Activated T-helper 1 cell treated with anti-CD3 and anti-CD28 coated beads, Interleukin-12 subunit alpha, Interleukin-12 subunit beta, Interleukin-2, Interleukin-4 antibody, amounts not matched to agents 30 ng/mL and 10 ng/mL and 1 ng/mL, durations not matched to agents 14 hours and 24 hours and 36 hours (primary cell): ENCODE measurements at regions of chr9 and their contacts with region 1.

Region 1: GRCh38 chr9:22079873-22080341 is 70.8 kb upstream of the CDKN2B start:
- DNase-seq: peak; percentile 72
- H3K4me3 Mint-ChIP-seq: peak overlapping the region; percentile 56
- H3K27ac Mint-ChIP-seq: peak overlapping the region; percentile 78
- H3K4me1 Mint-ChIP-seq: peaks cover 54% of the 10 kb centered on the region
- H3K27me3 Mint-ChIP-seq: peaks cover 17% of the 10 kb centered on the region

Region 2: DNA sequence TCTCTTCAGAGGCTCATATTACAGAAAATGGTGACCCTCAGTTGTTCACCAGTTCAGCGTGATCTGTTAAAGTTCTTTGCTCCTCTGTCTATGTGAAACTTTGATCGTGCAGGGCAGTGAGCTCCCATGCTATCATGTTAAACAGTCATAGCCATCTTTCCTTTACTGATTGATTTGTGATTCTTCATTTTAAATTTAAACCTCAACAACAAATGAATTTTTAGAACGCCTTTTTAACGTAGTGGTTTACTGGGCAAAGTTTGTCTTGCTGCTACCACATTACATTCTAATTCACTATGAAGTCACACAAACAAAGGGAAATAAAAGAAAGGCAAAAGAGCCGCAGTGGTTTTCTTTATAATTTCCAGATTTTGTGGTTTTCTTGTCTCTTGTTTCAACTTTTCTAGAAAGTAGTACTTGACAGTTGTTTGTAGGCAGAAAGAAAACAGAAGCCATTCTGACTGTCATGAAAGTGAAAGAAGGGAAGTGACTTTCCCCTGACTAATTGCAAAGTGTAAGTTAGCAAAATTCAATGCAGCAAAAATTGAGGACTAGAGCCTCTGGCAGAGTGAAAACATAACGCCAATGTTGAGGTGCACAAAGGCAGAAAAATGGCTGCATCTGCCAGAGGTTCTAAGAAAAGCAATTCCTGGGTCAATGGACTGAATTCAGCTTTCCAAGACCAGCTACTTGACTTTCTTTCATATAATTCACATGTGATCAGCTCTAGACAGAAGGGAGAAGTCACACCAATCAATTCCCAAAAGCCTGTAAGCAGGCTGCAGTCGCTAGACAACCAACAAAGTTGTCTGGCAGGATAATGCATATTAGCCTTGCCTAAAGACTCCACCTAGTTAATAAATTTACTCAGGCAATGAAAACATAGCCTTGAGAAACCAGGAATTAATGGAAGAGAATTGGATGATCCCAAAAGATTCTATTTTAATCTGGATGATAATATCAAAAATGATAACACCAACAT is 722.1 kb before region 1 on chr9:
- intact Hi-C with region 1: loop called (anchors 1 kb)
- DNase-seq: no peak
- H3K4me3 Mint-ChIP-seq: peak overlapping the region; percentile 56
- H3K27ac Mint-ChIP-seq: peak overlapping the region; percentile 68
- H3K4me1 Mint-ChIP-seq: peaks cover 14% of the 10 kb centered on the region
- H3K27me3 Mint-ChIP-seq: peaks cover 57% of the 10 kb centered on the region

Region 3: DNA sequence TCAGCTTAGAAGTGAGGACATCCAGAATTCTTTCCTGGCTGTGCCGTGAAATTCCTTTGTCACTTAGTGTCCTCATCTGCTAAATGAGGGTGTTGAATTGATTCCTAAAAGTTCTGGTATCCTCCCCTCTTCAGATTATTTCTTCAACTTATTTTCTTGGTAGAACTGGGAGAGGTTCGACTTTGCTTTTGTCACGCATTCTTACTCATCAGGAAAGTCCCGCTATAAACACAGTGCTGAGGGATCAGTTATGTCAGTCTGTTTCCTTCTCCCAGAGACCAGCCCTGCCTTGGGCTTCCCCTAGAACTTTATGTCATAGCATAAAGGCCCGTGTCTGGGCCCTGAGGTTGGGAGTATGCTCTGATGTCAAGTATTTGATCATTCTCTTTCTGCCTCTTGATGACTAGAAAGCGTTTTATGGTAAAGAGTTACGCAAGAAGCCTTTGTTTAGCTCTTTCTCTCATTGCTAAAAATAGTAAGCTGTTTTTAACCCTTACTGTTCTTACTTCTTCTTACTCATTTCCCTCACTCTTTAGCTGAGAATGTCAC is 247.9 kb before region 1 on chr9:
- intact Hi-C with region 1: loop called (anchors 1 kb)
- DNase-seq: peak; percentile 66
- H3K4me3 Mint-ChIP-seq: peak overlapping the region; percentile 20
- H3K27ac Mint-ChIP-seq: peak overlapping the region; percentile 73
- H3K4me1 Mint-ChIP-seq: peaks cover 73% of the 10 kb centered on the region
- H3K27me3 Mint-ChIP-seq: no peaks in the 10 kb centered on the region

Region 4: DNA sequence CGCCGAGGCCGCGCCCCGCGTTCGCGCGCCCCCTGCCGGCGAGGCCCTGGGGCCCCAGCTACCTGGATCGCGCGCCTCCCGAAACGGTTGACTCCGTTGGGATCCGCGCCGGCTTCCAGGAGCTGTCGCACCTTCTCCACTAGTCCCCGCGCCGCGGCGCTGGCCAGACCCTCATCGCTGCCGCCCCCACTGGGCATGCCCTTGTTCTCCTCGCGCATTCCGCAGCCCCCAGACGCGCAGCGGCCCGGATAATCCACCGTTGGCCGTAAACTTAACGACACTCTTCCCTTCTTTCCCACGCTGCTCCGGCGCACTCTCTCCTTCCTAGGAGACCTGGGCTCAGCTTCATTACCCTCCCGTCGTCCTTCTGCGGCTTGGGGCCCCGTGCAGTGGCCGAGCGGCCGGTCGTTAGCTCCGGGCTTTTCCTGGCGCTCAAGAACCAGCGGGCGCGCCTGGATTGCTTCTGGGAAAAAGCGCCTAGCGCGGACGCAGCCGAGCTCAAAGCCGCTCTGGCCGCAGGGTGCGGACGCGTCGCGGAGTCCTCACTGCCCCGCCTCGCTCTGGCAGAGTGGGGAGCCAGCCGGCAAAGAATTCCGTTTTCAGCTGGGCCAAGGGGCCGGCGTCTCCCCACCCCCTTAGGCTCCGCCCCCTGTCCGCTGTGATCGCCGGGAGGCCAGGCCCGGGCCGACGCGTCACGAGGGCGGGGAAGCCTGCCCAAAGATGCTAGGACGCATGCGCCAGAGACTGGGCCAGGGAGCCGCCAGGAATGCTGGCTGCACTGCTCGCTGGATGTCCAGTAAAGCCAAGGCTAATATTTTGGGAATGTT is 71.0 kb before region 1 on chr9 and contains the start of gene CDKN2B:
- intact Hi-C with region 1: loop called (anchors 2 kb)
- DNase-seq: peak; percentile 66
- H3K4me3 Mint-ChIP-seq: peak within 1 kb of the TSS; percentile 82
- H3K27ac Mint-ChIP-seq: no peak within 1 kb of the TSS
- H3K4me1 Mint-ChIP-seq: peaks cover 36% of the 10 kb centered on the region
- H3K27me3 Mint-ChIP-seq: peaks cover 65% of the 10 kb centered on the region
- total RNA-seq, gene CDKN2B: 0.73 and 0.76 TPM in 2 replicates

Region 5: GRCh38 chr9:22097697-22098096 is 17.8 kb after region 1 on chr9:
- intact Hi-C with region 1: loop called (anchors 1 kb)
- DNase-seq: no peak
- H3K4me3 Mint-ChIP-seq: no peak overlapping the region
- H3K27ac Mint-ChIP-seq: no peak overlapping the region
- H3K4me1 Mint-ChIP-seq: peaks cover 36% of the 10 kb centered on the region
- H3K27me3 Mint-ChIP-seq: peaks cover 30% of the 10 kb centered on the region

Region 6: GRCh38 chr9:22147813-22148524 is 68.1 kb after region 1 on chr9:
- intact Hi-C with region 1: loop called (anchors 1 kb)
- DNase-seq: peak; percentile 15
- H3K4me3 Mint-ChIP-seq: no peak overlapping the region
- H3K27ac Mint-ChIP-seq: peak overlapping the region; percentile 75
- H3K4me1 Mint-ChIP-seq: peaks cover 32% of the 10 kb centered on the region
- H3K27me3 Mint-ChIP-seq: peaks cover 22% of the 10 kb centered on the region

Region 7: DNA sequence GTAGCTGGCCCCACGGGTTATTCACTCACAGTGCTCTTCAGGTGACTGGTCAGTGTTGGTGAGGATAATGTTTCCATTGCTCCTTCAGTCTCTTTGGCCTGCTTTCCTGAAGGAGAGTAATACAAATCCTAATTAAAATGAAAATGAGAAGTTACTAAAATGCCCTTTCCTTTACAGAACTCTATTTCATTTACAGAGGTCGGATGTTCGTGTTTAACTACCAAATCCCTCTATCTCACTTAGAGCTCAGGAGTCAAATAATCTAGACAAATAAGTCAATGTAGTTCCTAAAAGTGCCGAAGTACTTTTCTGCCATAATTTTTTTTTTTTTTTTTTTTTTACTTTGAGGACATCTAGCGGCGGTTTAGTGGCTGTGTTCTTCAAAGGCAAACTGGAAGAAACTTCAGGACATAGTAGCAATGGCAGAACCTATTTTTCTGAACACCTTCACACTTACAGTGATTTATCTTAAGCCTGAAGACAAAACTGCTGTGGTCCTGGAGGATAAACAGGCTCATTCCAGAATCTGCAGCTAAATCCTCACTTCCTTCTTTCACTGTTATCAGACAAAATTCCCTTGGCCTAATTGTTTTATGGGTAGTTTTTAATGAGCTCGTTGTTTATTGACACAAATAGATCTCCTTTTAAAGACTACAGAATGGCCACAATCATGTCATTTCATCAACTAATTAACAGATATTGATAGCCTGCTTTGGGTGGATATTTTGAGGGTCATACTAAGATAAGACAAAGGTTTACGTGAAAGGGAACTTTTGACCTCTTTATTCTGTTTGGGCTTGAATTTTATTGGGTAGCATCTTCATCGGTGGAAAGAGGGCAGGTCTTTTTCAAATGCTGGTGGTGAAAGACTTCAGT is 159.1 kb after region 1 on chr9:
- intact Hi-C with region 1: loop called (anchors 2 kb)
- DNase-seq: no peak
- H3K4me3 Mint-ChIP-seq: no peak overlapping the region
- H3K27ac Mint-ChIP-seq: no peak overlapping the region
- H3K4me1 Mint-ChIP-seq: peaks cover 50% of the 10 kb centered on the region
- H3K27me3 Mint-ChIP-seq: peaks cover 43% of the 10 kb centered on the region